ENCODE measurements at regions of chr1 and their contacts with region 1.

Region 1: DNA sequence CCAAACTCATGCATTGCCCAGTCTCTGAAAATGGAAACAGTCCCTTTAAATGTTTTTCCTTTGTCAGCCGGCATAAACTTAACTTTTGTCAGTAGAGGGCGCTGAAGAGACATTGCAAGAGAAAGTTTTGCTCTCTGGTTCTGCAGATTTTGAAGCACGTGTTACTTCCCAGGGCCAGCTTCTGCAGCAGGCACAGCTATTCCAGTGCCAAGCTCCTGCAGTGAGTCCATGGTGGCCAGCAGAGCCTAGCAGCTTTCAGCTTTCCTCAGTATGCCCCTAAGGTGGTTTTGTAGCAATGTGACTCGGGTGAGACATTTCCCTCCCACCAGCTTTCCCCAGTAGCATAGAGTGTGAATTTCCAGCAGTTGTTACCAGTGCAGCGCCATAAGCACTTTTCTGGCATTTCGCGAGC is 2.6 kb upstream of the IFI44L start:
- DNase-seq: peak; percentile 66
- ATAC-seq: peak; percentile 62
- H3K4me3 Mint-ChIP-seq: no peak overlapping the region
- H3K27ac Mint-ChIP-seq: peak overlapping the region; percentile 47
- H3K4me1 Mint-ChIP-seq: peaks cover 34% of the 10 kb centered on the region
- H3K27me3 Mint-ChIP-seq: no peaks in the 10 kb centered on the region

Region 2: GRCh38 chr1:78607334-78607927 is 10.2 kb before region 1 on chr1:
- CTCF ChIA-PET with region 1: interaction called, 17 read pairs
- POLR2A ChIA-PET with region 1: interaction called, 5 read pairs
- intact Hi-C with region 1: no loop called
- DNase-seq: no peak
- ATAC-seq: no peak
- H3K4me3 Mint-ChIP-seq: no peak overlapping the region
- H3K27ac Mint-ChIP-seq: no peak overlapping the region
- H3K4me1 Mint-ChIP-seq: peaks cover 5% of the 10 kb centered on the region
- H3K27me3 Mint-ChIP-seq: no peaks in the 10 kb centered on the region

Region 3: DNA sequence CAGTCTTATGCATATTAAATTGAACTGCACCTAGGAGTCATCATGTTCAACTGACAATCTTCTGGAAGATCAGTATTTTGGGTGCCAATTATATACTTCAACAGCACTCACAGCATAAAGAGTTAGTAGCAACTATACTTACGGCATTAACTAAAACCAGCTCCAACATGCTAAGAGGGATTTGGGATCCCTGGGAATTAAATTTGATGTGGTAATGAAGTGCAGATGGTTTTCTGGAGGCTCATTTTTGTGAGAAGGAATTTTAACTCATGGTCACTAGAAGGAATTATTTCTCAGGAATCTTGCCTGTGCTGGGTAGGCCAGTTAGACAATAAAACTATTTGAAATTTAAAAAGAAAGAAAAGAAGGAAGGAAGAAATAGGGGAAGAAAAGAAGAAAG is 50.3 kb after region 1 on chr1:
- CTCF ChIA-PET with region 1: interaction called, 26 read pairs
- POLR2A ChIA-PET with region 1: no interaction called
- intact Hi-C with region 1: no loop called
- DNase-seq: no peak
- ATAC-seq: no peak
- H3K4me3 Mint-ChIP-seq: no peak overlapping the region
- H3K27ac Mint-ChIP-seq: no peak overlapping the region
- H3K4me1 Mint-ChIP-seq: peaks cover 7% of the 10 kb centered on the region
- H3K27me3 Mint-ChIP-seq: no peaks in the 10 kb centered on the region

Region 4: DNA sequence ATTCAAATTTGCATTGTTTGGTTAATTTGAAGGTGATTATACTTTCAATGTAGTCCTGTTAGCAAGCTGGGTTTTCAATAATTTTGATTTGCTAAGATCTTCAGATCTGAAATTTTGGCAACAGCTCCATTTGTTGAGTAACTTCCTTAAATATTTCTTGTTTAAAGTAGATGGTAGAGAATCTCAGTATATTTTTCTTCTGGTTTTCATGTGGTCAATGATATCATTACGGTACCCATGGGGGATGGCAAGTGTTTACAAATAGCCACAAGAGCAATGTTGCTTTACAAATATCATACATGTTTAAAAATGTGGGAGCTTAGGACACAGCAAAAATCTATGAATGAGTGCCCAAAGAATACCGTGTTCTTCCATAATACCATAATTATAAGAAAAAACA is 207.9 kb after region 1 on chr1:
- CTCF ChIA-PET with region 1: no interaction called
- POLR2A ChIA-PET with region 1: no interaction called
- intact Hi-C with region 1: loop called (anchors 5 to 10 kb)
- DNase-seq: no peak
- ATAC-seq: no peak
- H3K4me3 Mint-ChIP-seq: no peak overlapping the region
- H3K27ac Mint-ChIP-seq: no peak overlapping the region
- H3K4me1 Mint-ChIP-seq: no peaks in the 10 kb centered on the region
- H3K27me3 Mint-ChIP-seq: no peaks in the 10 kb centered on the region

Region 5: GRCh38 chr1:79353224-79353623 is 735.6 kb after region 1 on chr1:
- CTCF ChIA-PET with region 1: no interaction called
- POLR2A ChIA-PET with region 1: no interaction called
- intact Hi-C with region 1: loop called in 1 of 2 experiments (anchors 5 kb)
- DNase-seq: peak; percentile 6
- ATAC-seq: no peak
- H3K4me3 Mint-ChIP-seq: no peak overlapping the region
- H3K27ac Mint-ChIP-seq: no peak overlapping the region
- H3K4me1 Mint-ChIP-seq: no peaks in the 10 kb centered on the region
- H3K27me3 Mint-ChIP-seq: no peaks in the 10 kb centered on the region

Measured in activated CD4-positive, alpha-beta T cell treated with anti-CD3 and anti-CD28 coated beads for 36 hours (primary cell).